Activated CD4-positive, alpha-beta T cell treated with anti-CD3 and anti-CD28 coated beads, Interleukin-2, amount 10 ng/mL, durations not matched to agents 24 days and 14 days (primary cell): ENCODE measurements at regions of chr10 and their contacts with region 1.

Region 1: DNA sequence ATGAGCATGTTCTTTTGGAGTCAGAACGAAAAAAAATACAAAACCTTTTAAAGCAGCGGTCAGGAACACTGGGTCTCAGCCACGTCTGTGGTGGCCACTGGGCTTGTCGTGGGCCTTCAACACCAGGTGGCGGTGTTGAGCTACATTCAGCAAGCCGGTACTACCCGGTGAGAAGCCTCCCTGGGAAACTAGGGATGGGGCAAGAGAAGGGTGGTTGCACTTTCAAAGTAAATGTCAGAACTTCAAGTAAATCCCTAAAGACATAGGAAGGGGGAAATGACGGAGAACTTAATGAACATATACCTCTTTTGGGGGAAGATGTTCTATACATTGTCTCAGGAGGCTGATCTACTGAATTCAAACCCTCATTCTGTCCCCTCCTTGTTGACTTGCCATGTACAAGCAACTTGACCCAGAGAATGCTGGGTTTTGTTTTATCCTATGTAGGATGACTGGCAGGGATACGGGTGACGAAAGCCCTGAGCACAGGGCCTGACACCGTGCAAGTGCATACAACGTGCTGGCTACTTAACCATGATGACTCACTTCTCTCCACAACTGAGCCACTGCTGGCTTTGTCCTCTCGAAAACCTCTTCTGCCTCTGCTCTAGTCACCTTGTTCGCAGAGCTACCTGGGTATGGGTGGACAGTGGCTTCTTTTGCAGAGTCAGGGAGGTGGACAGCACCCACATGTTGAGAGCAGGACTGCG is 49.0 kb upstream of the BAMBI start:
- DNase-seq: peak; percentile 89
- H3K4me3 Mint-ChIP-seq: no peak overlapping the region
- H3K27ac Mint-ChIP-seq: no peak overlapping the region
- H3K4me1 Mint-ChIP-seq: peaks cover 2% of the 10 kb centered on the region
- H3K27me3 Mint-ChIP-seq: peaks cover 18% of the 10 kb centered on the region

Region 2: DNA sequence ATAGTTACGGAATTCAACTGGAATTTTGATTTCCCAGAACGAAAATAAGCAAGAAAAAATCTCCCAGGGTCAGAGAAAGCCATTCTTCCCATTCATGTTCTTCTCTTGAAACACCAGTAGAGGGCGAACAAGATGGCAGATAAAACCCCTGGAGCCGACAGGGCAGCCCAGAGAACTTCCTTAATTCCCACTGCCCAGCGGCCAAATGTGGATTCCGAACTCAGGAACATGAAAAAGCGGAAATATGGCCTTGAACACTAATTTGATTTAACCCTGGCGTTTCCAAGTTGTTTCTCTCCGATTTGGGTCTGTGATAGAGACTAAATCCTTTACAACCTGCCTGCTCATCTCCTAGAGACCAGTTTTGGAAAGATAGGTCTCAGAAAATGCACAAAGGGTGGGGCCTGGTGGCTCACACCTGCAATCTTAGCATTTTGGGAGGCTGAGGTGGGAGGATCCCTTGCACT is 196.1 kb before region 1 on chr10:
- intact Hi-C with region 1: loop called (anchors 10 kb)
- DNase-seq: peak; percentile 66
- H3K4me3 Mint-ChIP-seq: no peak overlapping the region
- H3K27ac Mint-ChIP-seq: no peak overlapping the region
- H3K4me1 Mint-ChIP-seq: peaks cover 3% of the 10 kb centered on the region
- H3K27me3 Mint-ChIP-seq: peaks cover 6% of the 10 kb centered on the region

Region 3: DNA sequence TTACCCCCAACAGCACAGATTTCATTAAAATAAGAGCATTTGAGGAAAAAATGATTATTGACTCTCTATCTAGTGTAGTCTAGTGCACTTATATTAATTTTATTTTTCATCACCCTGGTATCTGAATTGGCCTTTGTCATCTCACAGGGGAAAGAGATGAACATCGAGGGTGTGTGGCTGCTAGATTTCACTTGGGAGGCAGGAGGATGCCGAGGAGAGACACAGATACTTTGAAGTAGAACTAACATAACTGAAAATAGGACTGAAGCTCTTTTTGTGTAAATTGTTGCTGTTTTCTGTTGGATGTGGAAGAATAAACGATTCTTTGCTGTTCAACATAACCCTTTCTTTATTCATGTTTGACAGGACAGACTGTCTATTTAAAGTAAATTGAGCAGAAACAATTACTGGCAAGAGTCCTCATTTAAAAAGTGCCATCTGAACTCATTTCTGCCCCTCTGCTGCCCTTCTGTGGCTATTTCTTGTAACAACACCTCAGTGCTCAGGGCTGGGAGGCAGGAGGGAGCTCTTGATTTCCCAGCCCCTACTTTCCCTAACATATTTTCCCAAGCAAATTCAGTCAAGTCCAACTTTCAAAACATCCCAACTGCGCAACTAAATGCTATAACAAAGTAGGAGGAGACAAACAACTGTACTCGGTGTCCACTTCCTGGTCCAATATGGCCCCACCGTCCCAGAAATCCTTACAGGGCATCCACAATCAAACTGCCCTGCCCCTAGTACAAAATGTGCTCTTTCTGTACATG is 676.1 kb after region 1 on chr10:
- intact Hi-C with region 1: loop called (anchors 1 kb)
- DNase-seq: peak; percentile 73
- H3K4me3 Mint-ChIP-seq: peak overlapping the region; percentile 8
- H3K27ac Mint-ChIP-seq: no peak overlapping the region
- H3K4me1 Mint-ChIP-seq: no peaks in the 10 kb centered on the region
- H3K27me3 Mint-ChIP-seq: peaks cover 6% of the 10 kb centered on the region